ENCODE measurements at regions of chr5 and their contacts with region 1.

Region 1: DNA sequence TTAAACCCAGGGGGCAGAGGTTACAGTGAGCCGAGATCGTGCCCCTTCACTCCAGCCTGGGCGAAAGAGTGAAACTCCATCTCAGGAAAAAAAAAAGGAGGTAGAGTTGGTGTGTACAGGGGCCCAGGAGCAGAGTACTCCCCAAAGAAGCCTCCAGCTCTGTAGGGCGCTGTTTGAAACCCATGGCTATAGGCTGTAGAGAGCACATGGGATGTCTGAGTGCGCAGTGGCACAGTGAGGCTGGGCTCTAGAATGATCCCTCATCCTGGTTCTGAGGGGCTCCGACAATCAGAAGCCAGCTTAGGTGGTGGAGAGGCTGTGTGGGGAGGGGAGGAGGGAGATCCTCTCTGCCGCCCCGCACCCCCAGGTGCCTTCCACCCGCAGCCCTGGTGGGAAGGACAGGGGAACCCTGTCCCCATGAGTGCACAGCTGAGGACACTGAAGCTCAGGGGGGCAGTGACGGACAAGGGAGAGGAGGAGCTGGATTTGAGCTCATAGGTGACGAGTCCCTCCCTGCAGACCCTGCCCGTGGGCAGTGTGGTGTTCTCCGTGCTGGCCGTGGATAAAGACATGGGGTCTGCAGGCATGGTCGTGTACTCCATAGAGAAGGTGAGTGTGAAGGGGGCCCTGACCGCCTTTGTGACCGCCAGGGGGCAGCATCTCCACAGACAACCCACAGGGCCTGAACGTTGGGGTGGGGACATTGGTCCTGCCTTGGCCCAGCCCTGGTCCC is 24.6 kb downstream of the CDHR2 start:
- DNase-seq: peak; percentile 32
- ATAC-seq: peak; percentile 95
- H3K4me3 ChIP-seq: no peak overlapping the region
- H3K27ac ChIP-seq: no peak overlapping the region
- H3K4me1 ChIP-seq: no peaks in the 10 kb centered on the region
- H3K27me3 ChIP-seq: peaks cover 5% of the 10 kb centered on the region; the same call in 1 of the 2 replicates
- CTCF ChIP-seq: peak; percentile 82
- POLR2A ChIP-seq: no peak
- RAD21 ChIP-seq: peak; percentile 86

Region 2: GRCh38 chr5:175729829-175730277 is 843.9 kb before region 1 on chr5:
- CTCF ChIA-PET with region 1: no interaction called
- POLR2A ChIA-PET with region 1: no interaction called
- dilution Hi-C with region 1: no loop called
- in situ Hi-C with region 1: loop called (anchors 25 kb)
- intact Hi-C with region 1: no loop called
- DNase-seq: peak; percentile 85
- ATAC-seq: peak; percentile 99
- H3K4me3 ChIP-seq: no peak overlapping the region
- H3K27ac ChIP-seq: no peak overlapping the region
- H3K4me1 ChIP-seq: no peaks in the 10 kb centered on the region
- H3K27me3 ChIP-seq: no peaks in the 10 kb centered on the region; the same call in 1 of the 2 replicates
- CTCF ChIP-seq: peak; percentile 99
- POLR2A ChIP-seq: peak; percentile 60
- RAD21 ChIP-seq: peak; percentile 100

Region 3: GRCh38 chr5:175778951-175779538 is 794.7 kb before region 1 on chr5:
- CTCF ChIA-PET with region 1: no interaction called
- POLR2A ChIA-PET with region 1: no interaction called
- dilution Hi-C with region 1: no loop called
- in situ Hi-C with region 1: no loop called
- intact Hi-C with region 1: no loop called
- DNase-seq: no peak
- ATAC-seq: no peak
- H3K4me3 ChIP-seq: no peak overlapping the region
- H3K27ac ChIP-seq: no peak overlapping the region
- H3K4me1 ChIP-seq: no peaks in the 10 kb centered on the region
- H3K27me3 ChIP-seq: no peaks in the 10 kb centered on the region
- CTCF ChIP-seq: no peak
- POLR2A ChIP-seq: no peak
- RAD21 ChIP-seq: no peak

Region 4: GRCh38 chr5:176436661-176437071 is 137.1 kb before region 1 on chr5:
- CTCF ChIA-PET with region 1: interaction called, 5 read pairs
- POLR2A ChIA-PET with region 1: interaction called, 15 read pairs
- dilution Hi-C with region 1: no loop called
- in situ Hi-C with region 1: no loop called
- intact Hi-C with region 1: no loop called
- DNase-seq: peak; percentile 88
- ATAC-seq: peak; percentile 89
- H3K4me3 ChIP-seq: no peak overlapping the region
- H3K27ac ChIP-seq: no peak overlapping the region
- H3K4me1 ChIP-seq: peaks cover 5% of the 10 kb centered on the region
- H3K27me3 ChIP-seq: peaks cover 5% of the 10 kb centered on the region
- CTCF ChIP-seq: no peak
- POLR2A ChIP-seq: no peak
- RAD21 ChIP-seq: no peak

Region 5: DNA sequence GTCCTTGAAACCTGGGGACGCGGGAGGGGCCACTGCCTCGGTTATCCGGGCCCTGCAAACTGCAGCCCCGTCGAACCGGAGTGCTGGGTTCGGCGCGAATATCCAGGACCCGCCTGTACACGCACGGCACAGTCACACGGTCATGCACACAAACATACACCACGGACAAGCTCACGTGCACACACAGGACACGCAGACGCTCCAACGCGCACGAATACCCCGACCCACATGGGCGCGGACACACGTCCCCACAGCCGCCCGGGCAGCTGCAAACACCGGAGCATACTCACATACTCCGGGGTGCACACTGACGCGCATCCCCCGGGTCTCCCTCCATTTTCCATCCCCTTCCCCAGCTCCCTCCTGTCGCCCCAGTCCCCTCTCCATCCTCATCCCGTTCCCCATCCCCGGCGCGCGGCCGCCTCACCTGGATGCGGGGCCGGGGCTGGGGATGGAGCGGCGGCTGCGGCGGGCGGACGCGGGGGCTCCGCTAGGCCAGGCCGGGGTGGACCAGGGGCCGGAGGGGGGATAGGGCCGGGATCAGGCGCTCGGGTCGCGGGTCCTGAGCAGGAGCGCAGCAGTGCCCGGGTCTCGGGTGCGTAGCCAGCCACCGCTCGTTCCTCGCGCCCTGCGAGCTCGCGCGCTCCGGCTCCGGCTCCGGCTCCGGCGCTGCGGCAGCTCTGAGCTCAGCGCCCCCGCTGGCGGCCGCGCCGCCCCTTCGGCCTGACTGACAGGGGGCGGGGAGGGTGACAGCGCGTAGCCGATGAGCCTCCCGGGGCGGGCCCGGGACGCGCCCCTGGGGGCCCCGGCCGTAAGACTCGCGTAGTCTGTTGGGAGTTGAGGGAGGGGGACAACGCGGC is 56.4 kb after region 1 on chr5 and contains the starts of genes EIF4E1B and SNCB:
- CTCF ChIA-PET with region 1: interaction called, 4 read pairs
- POLR2A ChIA-PET with region 1: no interaction called
- dilution Hi-C with region 1: no loop called
- in situ Hi-C with region 1: loop called (anchors 10 kb)
- intact Hi-C with region 1: no loop called
- DNase-seq: no peak
- ATAC-seq: peak; percentile 94
- H3K4me3 ChIP-seq: peak within 1 kb of the TSS; percentile 26
- H3K27ac ChIP-seq: no peak within 1 kb of the TSS
- H3K4me1 ChIP-seq: peaks cover 2% of the 10 kb centered on the region; the same call in 1 of the 2 replicates
- H3K27me3 ChIP-seq: peaks cover 73% of the 10 kb centered on the region
- CTCF ChIP-seq: no peak
- POLR2A ChIP-seq: no peak
- RAD21 ChIP-seq: no peak
- total RNA-seq, gene EIF4E1B: not detected in 2 replicates
- total RNA-seq, gene SNCB: not detected in 2 replicates

Region 6: DNA sequence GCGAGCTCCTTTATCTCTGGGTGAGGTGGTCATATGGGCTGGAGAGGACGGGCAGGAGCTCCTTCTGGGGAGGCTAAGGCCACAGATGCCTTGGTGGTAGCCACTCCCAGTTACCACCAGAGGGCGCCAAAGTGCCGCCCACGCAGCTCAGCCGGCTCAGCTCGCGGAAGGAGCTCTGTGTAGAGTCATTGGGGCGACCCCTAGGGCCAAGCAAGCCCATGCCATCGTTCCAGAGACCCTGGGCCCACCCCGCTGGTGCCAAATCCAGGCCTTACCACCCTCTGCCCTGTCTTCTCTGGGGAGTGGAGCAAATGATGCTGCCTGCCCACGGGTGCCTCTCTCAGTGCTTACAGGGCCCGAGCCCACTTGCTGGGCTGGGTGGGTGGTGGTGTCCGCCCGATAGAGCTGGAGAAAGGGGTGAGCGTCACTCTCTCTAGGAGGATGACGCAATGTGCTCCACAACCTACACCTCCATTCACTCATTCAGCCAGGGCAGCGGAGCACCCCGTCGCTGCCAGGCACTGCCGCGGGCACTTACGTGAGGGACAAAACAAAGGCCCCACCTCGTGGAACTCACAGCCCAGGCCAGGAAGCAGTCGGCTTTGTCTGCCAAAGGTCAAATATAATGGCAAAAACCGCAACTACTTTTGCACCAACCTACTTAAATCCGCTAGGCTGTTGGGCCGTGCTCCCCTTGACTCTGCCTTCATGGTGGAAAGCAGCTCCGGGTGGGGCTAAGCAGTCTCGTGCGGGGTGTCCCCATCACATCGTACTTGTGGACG is 87.3 kb after region 1 on chr5:
- CTCF ChIA-PET with region 1: interaction called, 5 read pairs
- POLR2A ChIA-PET with region 1: no interaction called
- dilution Hi-C with region 1: no loop called
- in situ Hi-C with region 1: no loop called
- intact Hi-C with region 1: loop called (anchors 1 kb)
- DNase-seq: peak; percentile 62
- ATAC-seq: peak; percentile 89
- H3K4me3 ChIP-seq: no peak overlapping the region
- H3K27ac ChIP-seq: no peak overlapping the region
- H3K4me1 ChIP-seq: no peaks in the 10 kb centered on the region
- H3K27me3 ChIP-seq: peaks cover 20% of the 10 kb centered on the region
- CTCF ChIP-seq: peak; percentile 95
- POLR2A ChIP-seq: no peak
- RAD21 ChIP-seq: peak; percentile 89